Left cardiac atrium (tissue), 4 donors: ENCODE measurements at regions of chr17 and their contacts with region 1.

Region 1: GRCh38 chr17:7548585-7549400 is at the start of gene TNFSF12:
- DNase-seq: peak; percentile 76
- ATAC-seq: peak; percentile 88 to 89
- total RNA-seq, gene TNFSF12: 31.0 to 47.6 TPM

Region 2: GRCh38 chr17:7281430-7281952 is 267.3 kb before region 1 on chr17 and contains the start of gene SLC2A4:
- intact Hi-C with region 1: no loop called
- DNase-seq: peak; percentile 95
- ATAC-seq: peak; percentile 85 to 93
- total RNA-seq, gene SLC2A4: 79.1 to 87.6 TPM

Region 3: GRCh38 chr17:7306911-7307686 is 241.7 kb before region 1 on chr17 and contains the start of gene EIF5A:
- intact Hi-C with region 1: no loop called
- DNase-seq: peak; percentile 100
- ATAC-seq: peak; percentile 92 to 93
- total RNA-seq, gene EIF5A: 274 to 374 TPM

Region 4: GRCh38 chr17:7496470-7497183 is 52.2 kb before region 1 on chr17:
- intact Hi-C with region 1: loop called in 1 of 2 experiments (anchors 10 kb)
- DNase-seq: peak; percentile 36
- ATAC-seq: peak; percentile 52 to 58

Region 5: GRCh38 chr17:7589891-7590691 is 41.3 kb after region 1 on chr17 and contains the start of gene SOX15:
- intact Hi-C with region 1: no loop called
- DNase-seq: no peak
- ATAC-seq: peak in 1 of 2 donors; percentile 2
- total RNA-seq, gene SOX15: 3.0 to 4.7 TPM